AG04449 (cell line): ENCODE measurements at regions of chr1 and their contacts with region 1.

Region 1: GRCh38 chr1:91582431-91582921 is 81.8 kb downstream of the CDC7 start:
- DNase-seq: peak; percentile 95
- H3K4me3 ChIP-seq: no peak overlapping the region
- CTCF ChIP-seq: no peak

Region 2: DNA sequence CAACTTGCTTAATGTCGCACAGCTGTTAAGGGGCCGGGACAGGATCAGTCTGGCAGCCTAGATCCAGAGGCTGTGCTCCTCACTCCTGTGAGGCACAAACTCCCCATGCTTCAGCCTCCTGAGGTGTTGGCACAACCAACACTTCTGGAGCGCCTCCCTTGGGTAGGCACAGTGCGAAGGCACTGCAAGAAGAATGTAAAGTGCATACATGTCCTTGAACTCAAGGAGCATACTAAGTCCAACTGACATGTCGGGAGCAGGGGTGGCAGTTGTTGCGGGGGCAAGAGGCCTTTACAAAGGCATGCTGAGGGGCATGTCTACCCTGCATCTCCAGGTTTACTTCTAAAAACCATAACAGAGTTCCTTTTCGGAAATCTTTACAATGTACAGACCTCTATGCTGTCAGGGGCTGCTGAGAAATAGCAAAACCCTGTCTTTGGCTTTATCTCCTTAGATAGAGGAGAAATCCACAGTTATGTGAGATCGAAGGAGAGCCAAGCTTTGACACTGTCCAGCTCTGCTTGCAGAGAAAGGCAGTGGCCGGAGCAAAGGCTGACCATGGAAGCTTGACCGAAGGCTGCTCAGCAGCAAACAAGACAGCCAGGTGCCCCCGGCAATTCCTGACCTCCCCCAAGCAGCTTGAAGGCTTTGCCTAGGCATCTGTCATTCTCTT is 12.0 kb after region 1 on chr1:
- CTCF ChIA-PET with region 1: interaction called, 12 read pairs
- POLR2A ChIA-PET with region 1: no interaction called
- DNase-seq: no peak
- H3K4me3 ChIP-seq: no peak overlapping the region
- CTCF ChIP-seq: no peak